Posterior cingulate gyrus (tissue), 11 donors: ENCODE measurements at regions of chr17 and their contacts with region 1.

Region 1: GRCh38 chr17:59619293-59620063 is at the start of gene CLTC:
- DNase-seq: peak; percentile 87 to 99 (median 92)

Region 2: DNA sequence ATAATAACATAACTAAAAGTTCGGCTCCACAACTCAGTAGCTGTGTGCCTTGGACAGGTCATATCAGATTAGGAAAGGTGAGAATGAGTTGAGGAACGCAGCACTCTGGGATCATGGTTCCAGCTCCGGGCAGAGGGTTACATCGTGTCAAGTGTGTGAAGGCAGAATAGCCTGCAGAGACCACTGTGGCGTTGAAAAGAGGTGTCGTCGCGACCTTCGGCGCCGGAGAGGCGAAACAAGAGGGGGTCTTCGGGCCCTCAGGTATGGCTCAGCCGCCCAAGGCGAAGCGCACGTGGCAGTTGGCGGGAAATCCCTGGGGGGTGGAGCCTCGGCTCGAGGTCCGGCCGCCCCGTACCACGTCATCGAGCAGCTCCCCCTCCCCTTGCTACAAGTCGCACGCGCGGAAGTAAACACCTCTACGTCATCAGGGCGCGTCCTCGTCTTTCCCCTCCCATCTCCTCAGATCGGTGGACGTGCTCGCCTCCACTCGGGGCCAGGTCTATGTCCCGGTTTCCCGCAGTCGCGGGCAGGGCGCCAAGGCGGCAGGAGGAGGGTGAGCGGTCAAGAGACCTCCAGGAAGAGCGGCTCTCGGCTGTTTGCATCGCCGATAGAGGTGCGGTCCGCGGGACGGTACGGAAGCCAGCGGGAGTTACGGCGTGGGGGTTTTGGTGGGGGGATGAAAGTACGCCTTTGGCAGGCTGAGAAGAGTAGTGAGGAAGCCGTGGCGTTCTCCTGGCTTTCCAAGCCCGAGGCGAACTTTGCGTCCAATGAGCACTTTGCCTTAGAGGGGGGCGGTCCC is 54.1 kb before region 1 on chr17 and contains the start of gene DHX40:
- intact Hi-C with region 1: loop called (anchors 5 kb)
- DNase-seq: peak; percentile 87 to 99 (median 94)

Region 3: DNA sequence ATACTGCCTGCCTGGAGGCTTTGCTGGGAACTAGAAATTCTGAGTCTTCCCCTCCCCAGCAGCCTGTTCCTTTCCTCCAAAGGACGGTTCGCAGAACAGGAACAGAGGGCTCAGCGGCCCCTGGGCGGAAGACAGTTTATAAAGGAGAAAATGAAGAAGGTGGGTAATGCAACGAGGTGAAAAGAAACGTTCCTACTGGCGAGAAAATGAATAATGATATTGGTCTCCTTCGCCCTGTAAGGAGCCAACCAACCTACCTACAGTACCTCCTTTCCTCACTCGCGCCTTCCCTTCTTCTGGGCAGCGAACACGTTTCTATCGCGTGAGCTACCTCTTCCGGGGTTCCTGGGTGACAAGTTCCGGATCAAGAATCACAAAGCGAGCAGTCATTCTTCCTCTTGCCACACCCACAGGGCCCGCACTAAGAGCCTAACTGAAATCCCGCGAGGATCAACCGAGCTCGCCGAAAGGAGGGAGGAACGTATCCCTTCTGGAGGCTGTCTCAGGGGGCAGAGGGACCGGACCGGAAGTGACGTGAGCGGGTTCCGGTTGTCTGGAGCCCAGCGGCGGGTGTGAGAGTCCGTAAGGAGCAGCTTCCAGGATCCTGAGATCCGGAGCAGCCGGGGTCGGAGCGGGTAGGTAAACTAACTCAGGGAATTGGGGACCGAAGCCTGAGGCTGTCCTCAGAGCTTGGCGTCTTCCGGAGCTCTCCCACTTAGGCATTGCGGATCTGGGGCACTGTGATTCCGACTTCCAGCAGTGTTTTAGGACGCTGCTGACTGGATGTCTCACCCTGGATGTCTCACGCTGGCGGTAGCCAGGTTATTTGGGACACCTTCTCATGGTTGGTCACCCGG is 87.9 kb after region 1 on chr17 and contains the starts of genes PTRH2 and VMP1:
- intact Hi-C with region 1: loop called (anchors 2 kb)
- DNase-seq: peak; percentile 97 to 100 (median 99)

Region 4: GRCh38 chr17:59753522-59754467 is 134.3 kb after region 1 on chr17:
- intact Hi-C with region 1: no loop called
- DNase-seq: no peak

Region 5: GRCh38 chr17:59837308-59838051 is 218.0 kb after region 1 on chr17:
- intact Hi-C with region 1: no loop called
- DNase-seq: no peak